ENCODE measurements at regions of chr7 and their contacts with region 1.

Region 1: DNA sequence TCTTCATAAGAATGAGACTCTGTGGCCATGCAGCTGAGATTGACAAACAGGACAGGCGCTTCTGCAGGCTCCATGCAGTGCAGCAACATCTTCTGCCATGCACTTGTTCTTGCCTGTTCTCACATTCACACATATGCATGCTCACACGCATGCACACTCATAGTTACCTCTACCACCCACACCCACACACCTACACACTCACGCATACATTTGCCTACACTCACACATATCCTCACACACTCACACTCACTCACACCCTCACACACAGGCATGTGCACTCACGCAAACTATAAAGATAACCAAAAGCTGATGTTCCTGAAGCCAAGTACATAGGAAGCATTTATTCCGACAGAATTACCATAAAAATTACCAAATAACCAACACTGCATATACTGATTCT is 15.7 kb downstream of the GLI3 start:
- DNase-seq: no peak
- H3K4me3 ChIP-seq: no peak overlapping the region
- H3K27ac ChIP-seq: peak overlapping the region; percentile 79 to 86
- H3K4me1 ChIP-seq: peaks cover 0 to 8% of the 10 kb centered on the region in 2 donors
- H3K27me3 ChIP-seq: no peaks in the 10 kb centered on the region
- CTCF ChIP-seq: no peak
- POLR2A ChIP-seq: no peak

Region 2: GRCh38 chr7:42262964-42263363 is 41.7 kb after region 1 on chr7:
- intact Hi-C with region 1: loop called (anchors 2 kb)
- DNase-seq: peak in 1 of 2 donors; percentile 79
- H3K4me3 ChIP-seq: no peak overlapping the region
- H3K27ac ChIP-seq: no peak overlapping the region
- H3K4me1 ChIP-seq: no peaks in the 10 kb centered on the region
- H3K27me3 ChIP-seq: no peaks in the 10 kb centered on the region
- CTCF ChIP-seq: no peak
- POLR2A ChIP-seq: no peak